CD8-positive, alpha-beta T cell (primary cell): ENCODE measurements at regions of chr4 and their contacts with region 1.

Region 1: GRCh38 chr4:121192480-121192879 is 28.4 kb upstream of the TNIP3 start:
- DNase-seq: peak in 3 of 9 experiments; percentile 13 to 76 (median 64)
- ATAC-seq: no peak
- H3K4me3 ChIP-seq: no peak overlapping the region
- H3K4me3 Mint-ChIP-seq: peak overlapping the region; percentile 62
- H3K27ac ChIP-seq: no peak overlapping the region
- H3K27ac Mint-ChIP-seq: peak overlapping the region; percentile 32
- H3K4me1 ChIP-seq: peaks cover 45% of the 10 kb centered on the region
- H3K4me1 Mint-ChIP-seq: peaks cover 56% of the 10 kb centered on the region
- H3K27me3 ChIP-seq: no peaks in the 10 kb centered on the region
- H3K27me3 Mint-ChIP-seq: no peaks in the 10 kb centered on the region
- CTCF ChIP-seq: peak; percentile 97

Region 2: GRCh38 chr4:119692001-119692400 is 1500.5 kb before region 1 on chr4:
- CTCF ChIA-PET with region 1: no interaction called
- POLR2A ChIA-PET with region 1: no interaction called
- intact Hi-C with region 1: no loop called
- DNase-seq: no peak
- ATAC-seq: no peak
- H3K4me3 ChIP-seq: no peak overlapping the region
- H3K4me3 Mint-ChIP-seq: no peak overlapping the region
- H3K27ac ChIP-seq: no peak overlapping the region
- H3K27ac Mint-ChIP-seq: no peak overlapping the region
- H3K4me1 ChIP-seq: no peaks in the 10 kb centered on the region
- H3K4me1 Mint-ChIP-seq: no peaks in the 10 kb centered on the region
- H3K27me3 ChIP-seq: no peaks in the 10 kb centered on the region
- H3K27me3 Mint-ChIP-seq: peaks cover 18% of the 10 kb centered on the region
- CTCF ChIP-seq: no peak

Region 3: DNA sequence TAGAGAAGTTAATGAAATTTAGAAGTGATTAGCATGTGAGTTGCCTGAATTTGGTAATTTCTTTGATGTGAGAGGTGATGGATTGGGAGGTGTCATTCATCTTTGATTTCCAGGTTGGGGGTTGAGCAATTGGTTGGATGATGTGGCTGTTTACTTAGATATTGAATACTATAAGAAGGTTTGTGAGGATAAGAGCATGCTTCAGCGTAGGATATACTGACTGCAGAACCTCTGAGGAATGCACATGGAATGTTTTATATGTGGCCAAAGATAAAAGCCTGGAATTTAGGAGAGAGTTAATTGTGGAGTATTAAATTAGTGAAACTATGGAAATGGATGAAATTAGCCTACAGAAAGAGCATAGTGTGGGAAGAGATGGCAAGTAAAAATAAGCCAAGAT is 960.4 kb before region 1 on chr4:
- CTCF ChIA-PET with region 1: no interaction called
- POLR2A ChIA-PET with region 1: no interaction called
- intact Hi-C with region 1: no loop called
- DNase-seq: no peak
- ATAC-seq: no peak
- H3K4me3 ChIP-seq: no peak overlapping the region
- H3K4me3 Mint-ChIP-seq: no peak overlapping the region
- H3K27ac ChIP-seq: no peak overlapping the region
- H3K27ac Mint-ChIP-seq: no peak overlapping the region
- H3K4me1 ChIP-seq: no peaks in the 10 kb centered on the region
- H3K4me1 Mint-ChIP-seq: no peaks in the 10 kb centered on the region
- H3K27me3 ChIP-seq: no peaks in the 10 kb centered on the region
- H3K27me3 Mint-ChIP-seq: peaks cover 10% of the 10 kb centered on the region
- CTCF ChIP-seq: no peak

Region 4: DNA sequence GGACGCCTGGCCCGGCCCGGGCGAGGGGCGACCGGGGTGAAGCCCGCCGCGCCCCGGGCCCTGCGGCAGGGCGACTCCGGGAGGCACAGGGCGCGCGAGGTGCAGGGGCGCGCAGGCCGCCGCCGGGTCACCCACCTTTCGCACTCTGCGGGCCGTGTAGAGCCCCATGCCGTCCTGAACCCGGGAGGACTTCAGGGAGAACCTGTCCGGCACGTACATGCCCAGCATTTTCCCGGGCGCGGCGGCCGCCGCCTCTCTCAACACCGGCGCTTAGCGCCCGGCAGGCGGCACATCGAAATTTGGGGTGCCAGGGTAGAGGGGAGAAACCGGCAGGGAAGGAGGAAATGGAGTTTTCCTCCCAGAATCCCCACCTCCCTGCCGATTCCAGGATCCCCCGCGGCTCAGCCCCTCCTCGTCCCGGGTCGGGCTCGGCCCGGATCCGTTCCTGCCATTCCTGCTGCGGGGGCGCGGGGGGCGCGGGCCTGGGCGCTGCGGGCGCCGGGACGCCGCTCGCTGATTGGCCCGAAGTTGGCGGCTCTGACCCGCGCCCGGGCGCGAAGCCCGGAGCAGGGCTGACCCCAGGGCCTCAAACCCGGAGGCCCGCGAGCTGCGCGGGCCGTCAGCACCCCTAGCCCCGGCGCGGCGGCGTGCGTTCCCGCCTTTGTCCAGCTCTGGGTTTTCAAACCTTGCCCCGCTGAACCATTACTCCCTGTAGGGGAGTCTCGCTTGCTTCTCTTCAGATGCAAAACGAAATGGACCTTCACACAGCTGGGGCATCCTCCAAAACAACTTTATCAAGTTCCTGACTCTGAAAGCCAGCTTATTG is 269.9 kb before region 1 on chr4 and contains the start of gene PRDM5:
- CTCF ChIA-PET with region 1: no interaction called
- POLR2A ChIA-PET with region 1: no interaction called
- intact Hi-C with region 1: loop called in 1 of 2 experiments (anchors 5 kb)
- DNase-seq: peak in 8 of 9 experiments; percentile 3 to 67 (median 38)
- ATAC-seq: peak; percentile 53
- H3K4me3 ChIP-seq: peak within 1 kb of the TSS; percentile 61 to 86
- H3K4me3 Mint-ChIP-seq: peak within 1 kb of the TSS; percentile 89
- H3K27ac ChIP-seq: peak within 1 kb of the TSS; percentile 24 to 33
- H3K27ac Mint-ChIP-seq: peak within 1 kb of the TSS; percentile 70
- H3K4me1 ChIP-seq: peaks cover 8% of the 10 kb centered on the region
- H3K4me1 Mint-ChIP-seq: peaks cover 17% of the 10 kb centered on the region
- H3K27me3 ChIP-seq: no peaks in the 10 kb centered on the region
- H3K27me3 Mint-ChIP-seq: no peaks in the 10 kb centered on the region
- CTCF ChIP-seq: no peak
- total RNA-seq, gene PRDM5: 0.92 to 1.1 TPM

Region 5: DNA sequence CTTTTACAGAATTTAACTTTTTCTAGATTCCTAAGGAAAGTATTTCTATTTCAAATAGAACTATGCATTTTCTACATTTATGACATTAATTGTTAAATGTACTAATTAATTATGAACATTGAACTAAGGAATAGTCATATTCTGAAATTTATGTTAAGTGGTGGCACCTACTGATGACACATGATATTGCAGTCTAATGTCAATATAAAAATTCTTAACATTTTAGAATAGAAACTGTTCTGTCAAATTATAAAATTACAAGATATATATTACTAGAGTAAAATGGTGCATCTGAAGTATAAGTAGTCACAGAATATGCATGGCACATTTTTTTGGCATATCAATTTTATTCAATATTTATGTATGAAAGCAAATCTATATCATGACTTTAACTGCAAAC is 80.0 kb before region 1 on chr4:
- CTCF ChIA-PET with region 1: interaction called, 21 read pairs
- POLR2A ChIA-PET with region 1: no interaction called
- intact Hi-C with region 1: loop called in 1 of 2 experiments (anchors 5 kb)
- DNase-seq: peak in 2 of 9 experiments; percentile 6 to 26
- ATAC-seq: no peak
- H3K4me3 ChIP-seq: no peak overlapping the region
- H3K4me3 Mint-ChIP-seq: no peak overlapping the region
- H3K27ac ChIP-seq: no peak overlapping the region
- H3K27ac Mint-ChIP-seq: no peak overlapping the region
- H3K4me1 ChIP-seq: no peaks in the 10 kb centered on the region
- H3K4me1 Mint-ChIP-seq: peaks cover 13% of the 10 kb centered on the region
- H3K27me3 ChIP-seq: no peaks in the 10 kb centered on the region
- H3K27me3 Mint-ChIP-seq: no peaks in the 10 kb centered on the region
- CTCF ChIP-seq: peak; percentile 73

Region 6: DNA sequence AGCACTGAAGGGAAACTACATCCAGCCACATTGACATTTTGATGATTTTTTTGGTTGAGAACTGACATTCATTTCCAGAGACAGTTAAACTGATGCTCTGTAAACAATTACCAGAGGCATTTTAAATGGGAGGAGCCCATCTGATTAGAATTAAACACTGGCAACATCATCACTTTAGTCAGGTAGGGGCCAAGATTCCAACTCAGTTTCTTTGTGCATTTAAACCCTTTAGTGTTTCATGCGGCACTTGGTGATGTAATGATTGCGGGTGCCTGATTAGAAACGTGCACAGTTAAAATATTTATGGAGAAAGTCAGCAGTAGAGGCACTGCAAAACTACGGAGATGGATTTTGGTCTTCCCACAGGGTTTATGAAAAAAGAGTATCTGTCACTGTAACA is 44.5 kb before region 1 on chr4:
- CTCF ChIA-PET with region 1: interaction called, 19 read pairs
- POLR2A ChIA-PET with region 1: no interaction called
- intact Hi-C with region 1: no loop called
- DNase-seq: no peak
- ATAC-seq: no peak
- H3K4me3 ChIP-seq: no peak overlapping the region
- H3K4me3 Mint-ChIP-seq: no peak overlapping the region
- H3K27ac ChIP-seq: no peak overlapping the region
- H3K27ac Mint-ChIP-seq: no peak overlapping the region
- H3K4me1 ChIP-seq: peaks cover 22% of the 10 kb centered on the region
- H3K4me1 Mint-ChIP-seq: peaks cover 45% of the 10 kb centered on the region
- H3K27me3 ChIP-seq: no peaks in the 10 kb centered on the region
- H3K27me3 Mint-ChIP-seq: no peaks in the 10 kb centered on the region
- CTCF ChIP-seq: no peak

Region 7: GRCh38 chr4:121182296-121182695 is 10.2 kb before region 1 on chr4:
- CTCF ChIA-PET with region 1: interaction called, 21 read pairs
- POLR2A ChIA-PET with region 1: interaction called, 7 read pairs
- intact Hi-C with region 1: loop called in 1 of 2 experiments (anchors 1 kb)
- DNase-seq: peak in 2 of 9 experiments; percentile 60 to 77
- ATAC-seq: peak; percentile 72
- H3K4me3 ChIP-seq: peak overlapping the region; percentile 53 to 57
- H3K4me3 Mint-ChIP-seq: peak overlapping the region; percentile 88
- H3K27ac ChIP-seq: peak overlapping the region; percentile 78 to 94
- H3K27ac Mint-ChIP-seq: peak overlapping the region; percentile 97
- H3K4me1 ChIP-seq: peaks cover 54% of the 10 kb centered on the region
- H3K4me1 Mint-ChIP-seq: peaks cover 82% of the 10 kb centered on the region
- H3K27me3 ChIP-seq: no peaks in the 10 kb centered on the region
- H3K27me3 Mint-ChIP-seq: no peaks in the 10 kb centered on the region
- CTCF ChIP-seq: no peak

Region 8: GRCh38 chr4:121307445-121308327 is 115.2 kb after region 1 on chr4:
- CTCF ChIA-PET with region 1: interaction called, 40 read pairs
- POLR2A ChIA-PET with region 1: interaction called, 3 read pairs
- intact Hi-C with region 1: loop called (anchors 1 to 2 kb)
- DNase-seq: peak in 6 of 9 experiments; percentile 8 to 79 (median 42)
- ATAC-seq: peak; percentile 38
- H3K4me3 ChIP-seq: no peak overlapping the region
- H3K4me3 Mint-ChIP-seq: no peak overlapping the region
- H3K27ac ChIP-seq: no peak overlapping the region
- H3K27ac Mint-ChIP-seq: peak overlapping the region; percentile 38
- H3K4me1 ChIP-seq: peaks cover 4% of the 10 kb centered on the region
- H3K4me1 Mint-ChIP-seq: peaks cover 12% of the 10 kb centered on the region
- H3K27me3 ChIP-seq: no peaks in the 10 kb centered on the region
- H3K27me3 Mint-ChIP-seq: peaks cover 5% of the 10 kb centered on the region
- CTCF ChIP-seq: peak; percentile 89

Region 9: GRCh38 chr4:121823505-121824170 is 631.2 kb after region 1 on chr4 and contains the start of gene CCNA2:
- CTCF ChIA-PET with region 1: no interaction called
- POLR2A ChIA-PET with region 1: no interaction called
- intact Hi-C with region 1: loop called in 1 of 2 experiments (anchors 10 kb)
- DNase-seq: peak; percentile 90 to 97 (median 95)
- ATAC-seq: peak; percentile 98
- H3K4me3 ChIP-seq: peak within 1 kb of the TSS; percentile 62 to 74
- H3K4me3 Mint-ChIP-seq: peak within 1 kb of the TSS; percentile 91
- H3K27ac ChIP-seq: peak within 1 kb of the TSS; percentile 64 to 77
- H3K27ac Mint-ChIP-seq: peak within 1 kb of the TSS; percentile 86
- H3K4me1 ChIP-seq: peaks cover 8% of the 10 kb centered on the region
- H3K4me1 Mint-ChIP-seq: peaks cover 13% of the 10 kb centered on the region
- H3K27me3 ChIP-seq: no peaks in the 10 kb centered on the region
- H3K27me3 Mint-ChIP-seq: no peaks in the 10 kb centered on the region
- CTCF ChIP-seq: no peak
- total RNA-seq, gene CCNA2: 0.22 to 0.43 TPM